Mammary epithelial cell (primary cell): ENCODE measurements at regions of chr10 and their contacts with region 1.

Region 1: DNA sequence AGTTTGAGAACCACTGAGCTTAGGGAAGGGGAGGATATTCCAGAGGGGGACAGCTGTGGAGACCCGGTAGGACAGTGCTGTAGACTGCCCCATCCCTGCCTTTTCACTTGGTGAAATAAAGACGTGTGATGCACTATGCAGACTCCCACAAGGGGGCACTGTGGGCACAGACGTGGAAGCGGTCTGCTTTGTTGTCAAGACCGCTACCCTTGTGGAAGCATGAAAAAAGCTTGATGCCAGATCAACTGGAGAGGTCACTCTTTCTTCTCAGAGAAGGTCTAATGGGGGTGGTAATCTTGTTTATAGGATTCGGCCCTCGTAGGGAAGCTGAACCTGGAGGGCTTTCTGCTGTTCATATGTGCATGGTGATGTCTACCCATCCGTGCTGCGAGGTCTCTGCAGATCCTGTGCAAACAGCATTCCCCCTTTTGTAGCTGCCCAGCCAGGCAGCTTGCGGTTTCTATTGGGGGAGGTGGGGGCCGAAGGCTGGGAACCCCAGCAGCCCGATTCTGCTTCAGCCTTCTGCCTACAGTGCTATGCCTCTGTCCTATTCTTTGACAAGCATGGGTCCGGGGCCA is 13.7 kb downstream of the RPS24 start:
- DNase-seq: peak; percentile 53
- H3K4me3 ChIP-seq: no peak overlapping the region
- H3K27ac ChIP-seq: no peak overlapping the region
- H3K4me1 ChIP-seq: no peaks in the 10 kb centered on the region
- H3K27me3 ChIP-seq: no peaks in the 10 kb centered on the region
- CTCF ChIP-seq: peak; percentile 92

Region 2: GRCh38 chr10:77513781-77514331 is 533.5 kb before region 1 on chr10:
- CTCF ChIA-PET with region 1: no interaction called
- dilution Hi-C with region 1: no loop called
- in situ Hi-C with region 1: no loop called
- intact Hi-C with region 1: no loop called
- DNase-seq: peak; percentile 92
- H3K4me3 ChIP-seq: peak overlapping the region in 1 of 3 experiments; percentile 7
- H3K27ac ChIP-seq: peak overlapping the region; percentile 56
- H3K4me1 ChIP-seq: peaks cover 48% of the 10 kb centered on the region
- H3K27me3 ChIP-seq: no peaks in the 10 kb centered on the region
- CTCF ChIP-seq: no peak

Region 3: GRCh38 chr10:78130966-78131710 is 83.7 kb after region 1 on chr10:
- CTCF ChIA-PET with region 1: no interaction called
- dilution Hi-C with region 1: no loop called
- in situ Hi-C with region 1: no loop called
- intact Hi-C with region 1: no loop called
- DNase-seq: no peak
- H3K4me3 ChIP-seq: no peak overlapping the region
- H3K27ac ChIP-seq: no peak overlapping the region
- H3K4me1 ChIP-seq: no peaks in the 10 kb centered on the region
- H3K27me3 ChIP-seq: peaks cover 2% of the 10 kb centered on the region
- CTCF ChIP-seq: no peak

Region 4: GRCh38 chr10:78211561-78212051 is 164.2 kb after region 1 on chr10:
- CTCF ChIA-PET with region 1: no interaction called
- dilution Hi-C with region 1: no loop called
- in situ Hi-C with region 1: no loop called
- intact Hi-C with region 1: loop called (anchors 1 kb)
- DNase-seq: peak; percentile 11
- H3K4me3 ChIP-seq: no peak overlapping the region
- H3K27ac ChIP-seq: no peak overlapping the region
- H3K4me1 ChIP-seq: no peaks in the 10 kb centered on the region
- H3K27me3 ChIP-seq: no peaks in the 10 kb centered on the region
- CTCF ChIP-seq: peak; percentile 31 to 69

Region 5: DNA sequence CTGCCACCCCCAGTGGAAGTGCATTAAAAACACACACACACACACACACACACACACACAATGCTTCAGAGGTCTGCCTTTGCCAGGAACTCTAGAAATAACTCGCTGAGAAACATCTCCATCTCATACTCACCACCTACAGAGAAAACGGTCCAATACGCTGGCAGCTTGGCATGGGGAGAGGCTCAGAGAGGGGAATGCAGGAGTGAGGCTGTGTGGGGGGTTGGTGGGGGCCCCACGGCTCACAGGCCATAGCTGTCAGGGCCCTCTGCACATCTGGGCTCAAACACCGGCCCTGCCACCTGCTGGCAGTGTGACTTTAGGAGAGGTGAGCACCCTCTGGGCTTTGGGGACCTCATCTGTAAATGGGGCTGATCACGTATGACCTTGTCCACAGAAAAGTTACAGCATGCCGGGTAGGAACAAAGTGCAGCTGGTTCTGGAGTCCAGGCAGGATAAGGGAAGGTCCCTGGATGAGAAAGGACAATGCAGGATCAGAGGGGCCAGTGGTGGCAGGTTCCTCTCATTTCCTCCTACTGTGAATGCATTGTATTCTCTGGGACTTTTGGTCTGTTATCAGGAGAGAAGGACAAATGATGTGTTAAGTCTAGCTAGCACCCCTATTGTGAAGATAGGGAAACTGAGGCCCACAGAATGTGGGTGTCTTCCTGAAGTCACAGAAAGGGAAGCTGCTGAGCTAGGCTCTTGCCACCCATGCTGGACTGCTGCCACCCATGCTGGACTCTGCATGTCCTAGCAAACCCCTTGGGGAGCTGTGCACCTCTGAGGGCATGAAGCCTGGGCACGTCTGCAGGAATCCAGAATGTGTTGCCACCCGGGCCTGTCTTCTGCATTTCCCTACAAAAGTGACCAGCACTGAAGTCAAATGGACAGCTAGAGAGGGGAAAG is 390.8 kb after region 1 on chr10:
- CTCF ChIA-PET with region 1: no interaction called
- dilution Hi-C with region 1: loop called (anchors 10 kb)
- in situ Hi-C with region 1: no loop called
- intact Hi-C with region 1: loop called (anchors 5 kb)
- DNase-seq: no peak
- H3K4me3 ChIP-seq: no peak overlapping the region
- H3K27ac ChIP-seq: no peak overlapping the region
- H3K4me1 ChIP-seq: no peaks in the 10 kb centered on the region
- H3K27me3 ChIP-seq: peaks cover 3% of the 10 kb centered on the region
- CTCF ChIP-seq: peak in 1 of 2 donors; percentile 20

Region 6: DNA sequence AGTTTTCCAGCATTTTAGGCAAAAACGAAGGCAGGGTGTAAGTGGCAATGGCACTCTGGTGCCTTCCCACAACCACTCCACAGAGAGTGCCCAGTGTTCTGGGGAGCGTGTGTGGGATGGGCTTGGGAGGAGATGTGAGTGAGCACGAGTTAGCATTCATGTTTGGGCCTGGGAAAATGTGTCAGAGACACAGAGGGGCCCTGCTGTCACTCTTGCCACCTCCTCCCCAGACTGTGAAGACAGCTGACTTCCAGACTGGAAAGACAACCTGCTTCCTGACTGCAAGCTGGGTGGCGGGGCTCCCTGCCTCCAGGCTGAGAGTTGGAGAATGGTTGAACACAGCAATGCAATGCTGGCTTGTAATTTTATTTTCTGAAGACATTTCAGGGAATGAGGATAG is 566.9 kb after region 1 on chr10:
- CTCF ChIA-PET with region 1: no interaction called
- dilution Hi-C with region 1: loop called (anchors 5 kb)
- in situ Hi-C with region 1: no loop called
- intact Hi-C with region 1: no loop called
- DNase-seq: no peak
- H3K4me3 ChIP-seq: no peak overlapping the region
- H3K27ac ChIP-seq: no peak overlapping the region
- H3K4me1 ChIP-seq: no peaks in the 10 kb centered on the region
- H3K27me3 ChIP-seq: peaks cover 6% of the 10 kb centered on the region
- CTCF ChIP-seq: no peak

Region 7: DNA sequence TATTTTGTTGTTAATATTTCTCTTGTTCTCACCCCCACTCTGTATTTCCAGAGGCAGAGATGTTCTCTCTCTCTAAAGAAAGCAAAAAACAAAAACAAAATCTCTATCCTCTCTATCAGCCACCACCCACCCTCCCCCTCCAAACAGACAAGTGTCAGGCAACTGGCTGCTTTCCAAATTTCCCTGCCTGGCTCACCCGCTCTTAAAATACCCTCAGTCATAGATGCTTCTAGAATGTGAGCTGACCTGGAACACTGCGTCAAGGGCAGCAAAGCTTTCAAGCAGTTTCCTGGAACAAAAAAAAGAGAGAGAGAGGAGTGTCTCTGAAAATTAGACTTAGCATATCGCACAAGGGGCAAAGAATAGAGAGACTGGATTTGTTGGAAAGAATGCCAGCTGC is 680.3 kb after region 1 on chr10:
- CTCF ChIA-PET with region 1: no interaction called
- dilution Hi-C with region 1: loop called (anchors 10 kb)
- in situ Hi-C with region 1: no loop called
- intact Hi-C with region 1: no loop called
- DNase-seq: no peak
- H3K4me3 ChIP-seq: no peak overlapping the region
- H3K27ac ChIP-seq: no peak overlapping the region
- H3K4me1 ChIP-seq: no peaks in the 10 kb centered on the region
- H3K27me3 ChIP-seq: no peaks in the 10 kb centered on the region
- CTCF ChIP-seq: no peak

Region 8: DNA sequence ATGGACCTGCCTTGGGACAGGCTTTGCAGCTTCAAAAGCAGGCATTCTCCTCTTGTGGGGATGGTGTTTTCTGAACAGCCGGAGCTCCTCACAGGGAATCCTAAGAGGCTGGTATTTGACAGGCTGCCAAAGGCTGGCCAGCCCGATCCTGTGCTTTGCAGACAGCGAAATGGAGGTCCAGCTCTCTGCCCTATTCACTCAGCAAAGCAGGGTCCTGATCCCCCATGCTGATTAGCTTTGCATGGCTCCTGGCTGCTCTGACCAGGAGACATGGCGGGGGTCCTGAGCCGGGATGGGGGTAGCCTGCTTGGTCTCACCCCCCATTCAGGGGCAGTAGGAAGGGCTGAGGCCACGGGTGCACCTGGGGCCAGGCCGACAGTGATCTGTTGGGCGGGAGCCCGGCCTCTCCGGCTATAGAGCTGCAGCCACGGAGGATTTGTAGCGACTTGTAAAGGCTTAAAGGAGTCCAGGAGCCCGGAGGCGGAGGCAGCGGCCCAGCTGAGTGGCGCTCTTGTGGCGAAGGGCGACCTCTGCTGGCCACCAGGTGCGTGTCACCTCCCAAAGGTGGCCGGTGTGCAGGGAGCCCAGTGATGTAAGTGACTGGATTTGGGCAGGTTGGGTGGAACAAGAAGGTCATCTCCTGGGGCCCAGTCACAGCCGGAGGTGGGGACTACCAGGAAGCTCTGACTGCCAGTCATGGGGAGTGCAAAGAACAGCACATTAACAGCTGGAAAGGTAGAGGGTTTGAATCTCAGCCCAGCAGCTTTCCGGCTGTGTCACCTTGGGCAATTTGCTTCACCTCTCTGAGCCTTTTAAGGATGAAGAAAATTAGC is 1147.9 kb after region 1 on chr10:
- CTCF ChIA-PET with region 1: no interaction called
- dilution Hi-C with region 1: loop called (anchors 5 kb)
- in situ Hi-C with region 1: loop called (anchors 10 kb)
- intact Hi-C with region 1: loop called (anchors 1 kb)
- DNase-seq: peak; percentile 79
- H3K4me3 ChIP-seq: no peak overlapping the region
- H3K27ac ChIP-seq: no peak overlapping the region
- H3K4me1 ChIP-seq: peaks cover 37% of the 10 kb centered on the region
- H3K27me3 ChIP-seq: no peaks in the 10 kb centered on the region
- CTCF ChIP-seq: peak; percentile 85 to 96